MCF 10A (cell line): ENCODE measurements at regions of chr6 and their contacts with region 1.

Region 1: DNA sequence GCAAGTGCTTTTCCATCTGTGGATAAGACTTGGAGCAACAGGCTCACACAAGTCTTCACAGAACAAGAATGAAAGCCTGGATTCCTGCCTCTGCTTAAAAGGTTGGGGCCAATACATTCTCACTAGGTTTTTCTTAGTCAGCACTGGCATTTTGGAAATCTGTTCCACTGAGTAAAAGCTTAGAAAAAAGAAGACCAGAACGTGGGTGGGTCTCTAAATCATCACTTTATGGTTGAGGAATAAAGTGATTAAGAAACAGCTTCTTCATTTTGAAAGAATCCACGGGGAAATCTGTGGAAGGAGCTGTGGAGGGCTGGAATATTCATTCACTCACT is 10.7 kb downstream of the PPP1R14C start:
- DNase-seq: no peak
- H3K4me3 Mint-ChIP-seq: peak overlapping the region; percentile 25
- H3K27ac Mint-ChIP-seq: peak overlapping the region; percentile 77
- H3K4me1 Mint-ChIP-seq: peaks cover 52% of the 10 kb centered on the region
- H3K27me3 Mint-ChIP-seq: no peaks in the 10 kb centered on the region
- CTCF ChIP-seq: no peak

Region 2: GRCh38 chr6:150016324-150017185 is 137.0 kb before region 1 on chr6:
- CTCF ChIA-PET with region 1: no interaction called
- POLR2A ChIA-PET with region 1: no interaction called
- intact Hi-C with region 1: no loop called
- DNase-seq: peak; percentile 74
- H3K4me3 Mint-ChIP-seq: no peak overlapping the region
- H3K27ac Mint-ChIP-seq: no peak overlapping the region
- H3K4me1 Mint-ChIP-seq: peaks cover 13% of the 10 kb centered on the region
- H3K27me3 Mint-ChIP-seq: peaks cover 43% of the 10 kb centered on the region
- CTCF ChIP-seq: peak; percentile 65

Region 3: DNA sequence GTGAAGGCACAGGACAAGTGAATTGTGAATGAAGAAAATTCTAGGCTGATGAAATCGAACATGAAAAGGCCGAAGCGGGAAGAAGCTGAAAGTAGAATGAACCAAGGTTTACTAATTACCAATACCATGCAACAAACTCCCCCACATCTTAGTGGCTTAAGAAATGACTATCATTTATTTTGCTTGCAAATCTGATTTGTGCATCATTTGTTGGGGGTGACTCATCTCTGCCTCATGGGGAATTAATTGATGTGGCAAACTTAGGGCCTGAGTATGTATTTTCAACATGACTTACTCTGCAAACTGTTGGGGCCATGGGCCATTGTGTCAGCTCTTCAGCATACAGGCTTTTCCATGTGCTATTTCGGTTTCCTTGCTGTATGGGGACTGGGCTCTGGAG is 16.1 kb after region 1 on chr6:
- CTCF ChIA-PET with region 1: interaction called, 3 read pairs
- POLR2A ChIA-PET with region 1: interaction called, 33 read pairs
- intact Hi-C with region 1: no loop called
- DNase-seq: peak; percentile 73
- H3K4me3 Mint-ChIP-seq: no peak overlapping the region
- H3K27ac Mint-ChIP-seq: peak overlapping the region; percentile 69
- H3K4me1 Mint-ChIP-seq: peaks cover 11% of the 10 kb centered on the region
- H3K27me3 Mint-ChIP-seq: no peaks in the 10 kb centered on the region
- CTCF ChIP-seq: no peak